ENCODE measurements at regions of chr1 and their contacts with region 1.

Region 1: GRCh38 chr1:107142140-107142542 is 1.3 kb downstream of the NTNG1 start:
- DNase-seq: peak; percentile 49
- H3K4me3 ChIP-seq: peak overlapping the region; percentile 63 to 68 (median 64)
- H3K27ac ChIP-seq: no peak overlapping the region
- H3K4me1 ChIP-seq: peaks cover 34% of the 10 kb centered on the region
- H3K27me3 ChIP-seq: no peaks in the 10 kb centered on the region
- CTCF ChIP-seq: peak; percentile 51 to 56

Region 2: GRCh38 chr1:106022312-106022902 is 1119.7 kb before region 1 on chr1:
- CTCF ChIA-PET with region 1: no interaction called
- dilution Hi-C with region 1: no loop called
- in situ Hi-C with region 1: loop called in 1 of 2 experiments (anchors 25 kb)
- intact Hi-C with region 1: loop called (anchors 5 kb)
- DNase-seq: no peak
- H3K4me3 ChIP-seq: no peak overlapping the region
- H3K27ac ChIP-seq: no peak overlapping the region
- H3K4me1 ChIP-seq: no peaks in the 10 kb centered on the region
- H3K27me3 ChIP-seq: no peaks in the 10 kb centered on the region
- CTCF ChIP-seq: peak; percentile 28 to 38

Region 3: GRCh38 chr1:106620521-106620954 is 521.6 kb before region 1 on chr1:
- CTCF ChIA-PET with region 1: no interaction called
- dilution Hi-C with region 1: no loop called
- in situ Hi-C with region 1: no loop called
- intact Hi-C with region 1: loop called (anchors 5 kb)
- DNase-seq: peak; percentile 96
- H3K4me3 ChIP-seq: no peak overlapping the region
- H3K27ac ChIP-seq: no peak overlapping the region
- H3K4me1 ChIP-seq: peaks cover 19% of the 10 kb centered on the region
- H3K27me3 ChIP-seq: no peaks in the 10 kb centered on the region
- CTCF ChIP-seq: peak in 1 of 2 donors; percentile 46

Region 4: GRCh38 chr1:106957783-106958182 is 184.4 kb before region 1 on chr1:
- CTCF ChIA-PET with region 1: no interaction called
- dilution Hi-C with region 1: no loop called
- in situ Hi-C with region 1: loop called in 1 of 2 experiments (anchors 25 kb)
- intact Hi-C with region 1: no loop called
- DNase-seq: no peak
- H3K4me3 ChIP-seq: no peak overlapping the region
- H3K27ac ChIP-seq: no peak overlapping the region
- H3K4me1 ChIP-seq: no peaks in the 10 kb centered on the region
- H3K27me3 ChIP-seq: peaks cover 10% of the 10 kb centered on the region
- CTCF ChIP-seq: peak in 1 of 2 donors; percentile 21

Region 5: DNA sequence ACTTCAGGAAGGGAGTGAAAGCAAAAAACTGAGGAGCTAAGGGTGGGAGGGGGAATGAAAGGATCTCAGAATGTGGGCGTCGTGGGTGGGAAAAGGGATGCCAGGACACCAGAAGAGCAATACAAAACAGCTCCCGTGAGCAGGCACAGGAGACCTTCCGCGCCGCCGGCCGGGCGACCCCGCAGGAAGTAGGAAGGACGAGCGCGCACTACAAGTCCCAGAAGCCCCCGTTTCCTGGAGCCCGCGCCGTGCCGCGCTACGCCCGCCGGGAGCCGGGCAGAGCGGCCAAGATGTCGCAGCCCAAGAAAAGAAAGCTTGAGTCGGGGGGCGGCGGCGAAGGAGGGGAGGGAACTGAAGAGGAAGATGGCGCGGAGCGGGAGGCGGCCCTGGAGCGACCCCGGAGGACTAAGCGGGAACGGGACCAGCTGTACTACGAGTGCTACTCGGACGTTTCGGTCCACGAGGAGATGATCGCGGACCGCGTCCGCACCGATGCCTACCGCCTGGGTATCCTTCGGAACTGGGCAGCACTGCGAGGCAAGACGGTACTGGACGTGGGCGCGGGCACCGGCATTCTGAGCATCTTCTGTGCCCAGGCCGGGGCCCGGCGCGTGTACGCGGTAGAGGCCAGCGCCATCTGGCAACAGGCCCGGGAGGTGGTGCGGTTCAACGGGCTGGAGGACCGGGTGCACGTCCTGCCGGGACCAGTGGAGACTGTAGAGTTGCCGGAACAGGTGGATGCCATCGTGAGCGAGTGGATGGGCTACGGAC is 85.5 kb before region 1 on chr1 and contains the start of gene PRMT6:
- CTCF ChIA-PET with region 1: interaction called, 16 read pairs
- dilution Hi-C with region 1: no loop called
- in situ Hi-C with region 1: loop called in 1 of 2 experiments (anchors 5 kb)
- intact Hi-C with region 1: loop called (anchors 1 kb)
- DNase-seq: peak; percentile 69
- H3K4me3 ChIP-seq: peak within 1 kb of the TSS; percentile 87 to 99 (median 96)
- H3K27ac ChIP-seq: peak within 1 kb of the TSS; percentile 61
- H3K4me1 ChIP-seq: peaks cover 9% of the 10 kb centered on the region
- H3K27me3 ChIP-seq: no peaks in the 10 kb centered on the region
- CTCF ChIP-seq: peak in 1 of 2 donors; percentile 11
- total RNA-seq, gene PRMT6: 14.4 to 17.7 TPM

Region 6: GRCh38 chr1:107076841-107077240 is 65.3 kb before region 1 on chr1:
- CTCF ChIA-PET with region 1: no interaction called
- dilution Hi-C with region 1: no loop called
- in situ Hi-C with region 1: no loop called
- intact Hi-C with region 1: no loop called
- DNase-seq: peak; percentile 94
- H3K4me3 ChIP-seq: no peak overlapping the region
- H3K27ac ChIP-seq: peak overlapping the region; percentile 29
- H3K4me1 ChIP-seq: peaks cover 7% of the 10 kb centered on the region
- H3K27me3 ChIP-seq: peaks cover 2% of the 10 kb centered on the region
- CTCF ChIP-seq: no peak